Left ventricle myocardium inferior (tissue), 1 donor: ENCODE measurements at regions of chr12 and their contacts with region 1.

Region 1: GRCh38 chr12:64679487-64679983 is 69.2 kb downstream of the RASSF3 start:
- DNase-seq: peak; percentile 78
- H3K4me3 ChIP-seq: peak overlapping the region; percentile 36
- H3K27ac ChIP-seq: peak overlapping the region; percentile 74
- H3K4me1 ChIP-seq: peaks cover 98% of the 10 kb centered on the region
- H3K27me3 ChIP-seq: no peaks in the 10 kb centered on the region
- CTCF ChIP-seq: no peak

Region 2: GRCh38 chr12:64560396-64561304 is 118.9 kb before region 1 on chr12:
- intact Hi-C with region 1: no loop called
- DNase-seq: no peak
- H3K4me3 ChIP-seq: no peak overlapping the region
- H3K27ac ChIP-seq: no peak overlapping the region
- H3K4me1 ChIP-seq: no peaks in the 10 kb centered on the region
- H3K27me3 ChIP-seq: no peaks in the 10 kb centered on the region
- CTCF ChIP-seq: no peak

Region 3: GRCh38 chr12:64610149-64610678 is 69.3 kb before region 1 on chr12 and contains the start of gene RASSF3:
- intact Hi-C with region 1: loop called (anchors 10 kb)
- DNase-seq: peak; percentile 77
- H3K4me3 ChIP-seq: peak within 1 kb of the TSS; percentile 98
- H3K27ac ChIP-seq: peak within 1 kb of the TSS; percentile 98
- H3K4me1 ChIP-seq: peaks cover 53% of the 10 kb centered on the region
- H3K27me3 ChIP-seq: no peaks in the 10 kb centered on the region
- CTCF ChIP-seq: no peak
- total RNA-seq, gene RASSF3: 102 TPM